Natural killer cell (primary cell): ENCODE measurements at regions of chr7 and their contacts with region 1.

Region 1: GRCh38 chr7:101542527-101543241 is 86.4 kb downstream of the MYL10 start:
- DNase-seq: peak; percentile 66 to 81
- ATAC-seq: peak; percentile 46 to 72 (median 52)
- H3K4me3 ChIP-seq: no peak overlapping the region
- H3K4me3 Mint-ChIP-seq: no peak overlapping the region
- H3K27ac ChIP-seq: no peak overlapping the region
- H3K27ac Mint-ChIP-seq: no peak overlapping the region
- H3K4me1 ChIP-seq: peaks cover under 1% of the 10 kb centered on the region
- H3K4me1 Mint-ChIP-seq: peaks cover 0 to 10% of the 10 kb centered on the region in 2 donors
- H3K27me3 ChIP-seq: no peaks in the 10 kb centered on the region
- H3K27me3 Mint-ChIP-seq: peaks cover 0 to 6% of the 10 kb centered on the region in 2 donors
- CTCF ChIP-seq: peak; percentile 91

Region 2: DNA sequence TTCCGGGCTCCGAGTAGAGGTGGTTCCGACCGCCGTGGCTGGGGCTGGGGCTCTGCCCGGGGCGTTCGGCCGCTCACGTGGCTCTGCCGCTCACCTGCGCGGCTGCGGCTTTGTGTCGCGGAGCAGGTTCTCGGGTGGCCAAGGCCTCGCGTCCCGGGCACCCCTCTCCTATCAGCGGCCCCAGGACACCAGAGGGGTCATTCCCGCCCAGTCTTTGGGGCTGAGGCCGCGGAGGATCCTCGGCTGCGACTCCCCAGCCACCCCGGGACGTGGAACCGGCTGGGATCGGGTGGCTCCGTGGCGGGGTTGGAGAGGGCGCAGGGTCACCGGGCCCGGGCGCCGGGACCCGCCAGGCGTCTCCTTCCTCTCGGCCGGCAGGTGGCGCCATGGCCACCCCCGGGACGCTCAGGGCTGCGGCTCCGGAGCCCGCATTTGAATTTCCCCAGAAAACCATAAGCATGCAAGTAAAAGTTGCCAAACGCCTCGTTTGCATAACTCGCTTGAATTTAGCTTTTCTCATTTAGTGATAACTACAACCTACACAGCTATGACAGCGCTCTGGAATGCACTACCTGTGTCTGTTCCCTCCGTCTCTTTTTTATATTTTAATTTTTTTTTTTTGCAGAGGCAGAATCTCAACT is 178.8 kb before region 1 on chr7:
- intact Hi-C with region 1: loop called (anchors 10 kb)
- DNase-seq: peak; percentile 59 to 84
- ATAC-seq: peak; percentile 87 to 92 (median 88)
- H3K4me3 ChIP-seq: peak overlapping the region; percentile 20
- H3K4me3 Mint-ChIP-seq: peak overlapping the region; percentile 50
- H3K27ac ChIP-seq: no peak overlapping the region
- H3K27ac Mint-ChIP-seq: no peak overlapping the region
- H3K4me1 ChIP-seq: peaks cover 9% of the 10 kb centered on the region
- H3K4me1 Mint-ChIP-seq: peaks cover 0 to 5% of the 10 kb centered on the region in 2 donors
- H3K27me3 ChIP-seq: peaks cover 9% of the 10 kb centered on the region
- H3K27me3 Mint-ChIP-seq: peaks cover 19 to 24% of the 10 kb centered on the region in 2 donors
- CTCF ChIP-seq: peak; percentile 91

Region 3: DNA sequence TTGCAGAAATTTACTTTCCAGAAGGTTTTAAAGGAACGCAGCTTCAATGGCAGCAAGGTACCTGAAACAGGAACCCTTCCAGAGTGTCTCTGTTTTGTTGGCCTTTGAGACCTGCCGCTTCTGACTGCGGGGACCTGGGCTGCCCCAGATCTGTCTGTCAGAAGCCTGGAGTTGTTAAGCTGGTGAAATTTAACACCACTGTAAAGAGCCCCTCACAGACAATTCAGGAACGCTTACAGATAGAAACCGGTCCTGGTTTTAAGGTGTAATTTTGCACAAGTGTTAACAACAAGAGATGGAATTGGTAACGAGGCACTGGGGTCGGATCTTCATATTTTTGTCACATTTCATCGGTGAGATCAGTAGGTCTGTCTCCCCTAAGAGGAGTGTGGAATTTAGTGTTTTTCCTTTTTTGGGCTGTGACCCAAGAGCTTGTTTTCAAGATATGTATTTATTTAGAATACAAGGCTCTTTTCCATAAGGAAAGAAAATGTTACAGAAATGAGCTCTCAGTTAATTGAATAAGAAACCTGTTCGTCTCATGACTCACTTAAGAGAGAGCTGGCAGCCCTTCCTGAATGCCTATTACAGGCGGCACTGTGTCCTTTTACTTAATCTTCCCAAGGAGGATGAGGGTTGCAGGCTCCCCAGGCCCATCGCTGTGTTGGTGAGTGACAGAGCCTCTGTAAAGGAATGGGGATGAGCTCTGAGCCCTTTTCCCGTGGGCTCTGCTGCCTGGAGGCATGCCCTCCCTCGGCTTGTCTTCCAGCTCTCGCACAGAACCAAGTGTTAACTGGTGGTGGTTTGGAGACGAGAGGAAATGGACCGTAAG is 443.4 kb after region 1 on chr7:
- intact Hi-C with region 1: no loop called
- DNase-seq: no peak
- ATAC-seq: no peak
- H3K4me3 ChIP-seq: no peak overlapping the region
- H3K4me3 Mint-ChIP-seq: no peak overlapping the region
- H3K27ac ChIP-seq: no peak overlapping the region
- H3K27ac Mint-ChIP-seq: no peak overlapping the region
- H3K4me1 ChIP-seq: peaks cover 36% of the 10 kb centered on the region
- H3K4me1 Mint-ChIP-seq: peaks cover 22 to 52% of the 10 kb centered on the region in 2 donors
- H3K27me3 ChIP-seq: no peaks in the 10 kb centered on the region
- H3K27me3 Mint-ChIP-seq: no peaks in the 10 kb centered on the region
- CTCF ChIP-seq: no peak

Region 4: DNA sequence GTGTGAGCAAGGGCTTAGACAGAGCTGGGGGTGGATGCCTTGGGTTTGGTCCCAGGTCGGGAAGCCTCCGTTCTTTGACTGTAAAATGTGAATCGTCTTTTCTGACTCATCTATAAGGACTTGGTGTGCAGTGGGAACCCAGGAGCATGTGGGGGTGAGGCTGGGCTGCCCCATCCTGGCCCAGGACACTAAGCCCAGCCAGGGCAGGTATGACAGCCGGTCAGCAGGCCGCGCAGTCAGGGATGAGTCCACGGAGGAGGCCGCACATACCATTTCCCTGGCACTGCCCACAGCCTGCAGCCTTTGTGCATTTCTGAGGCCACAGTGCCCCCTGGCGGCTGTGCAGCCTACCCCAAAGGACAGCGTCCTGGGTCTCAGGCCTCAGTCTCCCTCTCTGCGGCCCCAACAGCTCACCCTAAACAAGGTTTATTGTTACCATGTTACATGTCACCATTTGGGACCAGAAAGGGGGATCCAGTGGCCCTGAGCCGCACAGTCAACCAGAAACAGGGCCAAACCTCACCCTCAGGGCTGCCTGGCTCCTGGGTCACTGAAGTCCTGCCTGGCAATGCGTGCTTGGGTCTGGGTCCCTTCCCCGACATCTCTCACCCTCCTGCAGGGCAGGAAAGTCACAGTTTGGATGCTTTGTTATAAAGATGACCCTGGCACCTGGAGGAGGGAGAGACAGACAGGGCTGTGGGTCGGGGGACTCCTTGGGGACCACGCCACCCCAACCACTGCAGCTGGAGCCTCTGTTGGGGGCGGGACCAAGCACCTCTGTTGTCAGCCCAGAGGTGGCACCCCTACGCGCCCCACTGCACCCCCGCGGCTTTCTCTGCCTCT is 729.6 kb after region 1 on chr7:
- intact Hi-C with region 1: loop called (anchors 1 kb)
- DNase-seq: peak; percentile 75 to 84
- ATAC-seq: peak; percentile 62 to 92 (median 73)
- H3K4me3 ChIP-seq: no peak overlapping the region
- H3K4me3 Mint-ChIP-seq: no peak overlapping the region
- H3K27ac ChIP-seq: no peak overlapping the region
- H3K27ac Mint-ChIP-seq: no peak overlapping the region
- H3K4me1 ChIP-seq: no peaks in the 10 kb centered on the region
- H3K4me1 Mint-ChIP-seq: peaks cover 0 to 5% of the 10 kb centered on the region in 2 donors
- H3K27me3 ChIP-seq: no peaks in the 10 kb centered on the region
- H3K27me3 Mint-ChIP-seq: no peaks in the 10 kb centered on the region
- CTCF ChIP-seq: peak; percentile 87